T-cell (primary cell): ENCODE measurements at regions of chr11 and their contacts with region 1.

Region 1: DNA sequence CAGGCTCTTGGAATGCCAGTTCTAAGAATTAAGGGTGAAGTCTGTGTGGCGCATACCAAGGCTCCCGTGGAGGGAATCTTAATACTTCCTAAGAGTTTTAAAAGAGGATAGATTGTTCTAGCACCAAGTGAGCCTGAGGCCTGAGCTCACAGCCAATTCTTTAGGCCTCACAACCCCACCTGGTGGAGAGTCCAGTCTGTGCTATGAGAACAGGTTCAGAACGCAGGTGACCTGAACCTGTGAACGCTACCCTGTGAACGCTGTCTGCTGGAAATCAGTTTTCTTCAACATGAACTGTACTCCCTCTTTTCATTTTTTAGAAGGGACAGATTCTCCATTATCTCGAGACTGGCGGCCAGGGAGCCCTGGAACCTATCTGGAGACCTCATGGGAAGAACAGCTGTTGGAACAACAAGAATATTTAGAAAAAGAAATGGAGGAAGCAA is 43.2 kb upstream of the DLAT start:
- DNase-seq: peak in 32 of 35 experiments; percentile 13 to 65 (median 44)
- ATAC-seq: peak in 3 of 4 experiments; percentile 44 to 89 (median 54)
- H3K4me3 ChIP-seq: no peak overlapping the region
- H3K4me3 Mint-ChIP-seq: no peak overlapping the region
- H3K27ac ChIP-seq: no peak overlapping the region
- H3K27ac Mint-ChIP-seq: no peak overlapping the region
- H3K4me1 ChIP-seq: peaks cover 0 to 9% of the 10 kb centered on the region in 2 experiments
- H3K4me1 Mint-ChIP-seq: peaks cover 7 to 11% (median 7%) of the 10 kb centered on the region in 3 donors
- H3K27me3 ChIP-seq: peaks cover 3 to 17% of the 10 kb centered on the region in 2 experiments
- H3K27me3 Mint-ChIP-seq: peaks cover 22 to 23% of the 10 kb centered on the region in 2 donors

Region 2: DNA sequence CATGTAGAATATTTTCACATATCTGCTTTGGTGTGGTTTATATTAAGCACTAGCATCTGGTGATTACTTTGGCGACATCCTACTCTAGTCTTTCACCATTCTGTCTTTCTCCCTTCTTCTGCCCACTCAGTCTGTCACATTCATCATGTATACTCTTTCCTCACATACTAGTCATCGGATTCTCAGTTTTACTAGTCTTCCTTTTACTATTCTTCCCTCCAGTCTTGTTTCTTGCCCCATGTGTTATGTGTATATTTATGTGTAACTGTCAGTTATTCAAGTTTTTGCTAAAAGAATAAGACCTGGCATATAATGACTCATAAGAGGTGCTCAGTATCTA is 49.5 kb before region 1 on chr11:
- CTCF ChIA-PET with region 1: interaction called, 11 to 19 read pairs
- POLR2A ChIA-PET with region 1: interaction called, 3 to 5 read pairs
- DNase-seq: no peak
- ATAC-seq: no peak
- H3K4me3 ChIP-seq: no peak overlapping the region
- H3K4me3 Mint-ChIP-seq: no peak overlapping the region
- H3K27ac ChIP-seq: no peak overlapping the region
- H3K27ac Mint-ChIP-seq: no peak overlapping the region
- H3K4me1 ChIP-seq: peaks cover 7 to 25% of the 10 kb centered on the region in 2 experiments
- H3K4me1 Mint-ChIP-seq: peaks cover 12 to 22% (median 19%) of the 10 kb centered on the region in 3 donors
- H3K27me3 ChIP-seq: no peaks in the 10 kb centered on the region
- H3K27me3 Mint-ChIP-seq: no peaks in the 10 kb centered on the region

Region 3: GRCh38 chr11:112000703-112001102 is 18.7 kb after region 1 on chr11:
- CTCF ChIA-PET with region 1: interaction called in 1 of 2 experiments, 3 read pairs
- POLR2A ChIA-PET with region 1: interaction called in 1 of 2 experiments, 12 read pairs
- DNase-seq: no peak
- ATAC-seq: no peak
- H3K4me3 ChIP-seq: no peak overlapping the region
- H3K4me3 Mint-ChIP-seq: no peak overlapping the region
- H3K27ac ChIP-seq: no peak overlapping the region
- H3K27ac Mint-ChIP-seq: no peak overlapping the region
- H3K4me1 ChIP-seq: no peaks in the 10 kb centered on the region
- H3K4me1 Mint-ChIP-seq: peaks cover 4 to 6% (median 6%) of the 10 kb centered on the region in 3 donors
- H3K27me3 ChIP-seq: peaks cover 0 to 8% of the 10 kb centered on the region in 2 experiments
- H3K27me3 Mint-ChIP-seq: peaks cover 0 to 7% of the 10 kb centered on the region in 2 donors